GM12878 (cell line): ENCODE measurements at regions of chr17 and their contacts with region 1.

Region 1: GRCh38 chr17:11747441-11747840 is 149.2 kb downstream of the DNAH9 start:
- DNase-seq: no peak
- ATAC-seq: no peak
- H3K4me3 ChIP-seq: no peak overlapping the region
- H3K27ac ChIP-seq: no peak overlapping the region
- H3K4me1 ChIP-seq: no peaks in the 10 kb centered on the region
- H3K27me3 ChIP-seq: no peaks in the 10 kb centered on the region
- CTCF ChIP-seq: no peak
- EP300 ChIP-seq: no peak
- POLR2A ChIP-seq: no peak
- RAD21 ChIP-seq: no peak

Region 2: GRCh38 chr17:11701911-11702310 is 45.5 kb before region 1 on chr17:
- CTCF ChIA-PET with region 1: no interaction called
- POLR2A ChIA-PET with region 1: no interaction called
- RAD21 ChIA-PET with region 1: no interaction called
- SMC1A ChIA-PET with region 1: no interaction called
- in situ Hi-C with region 1: loop called (anchors 5 kb)
- intact Hi-C with region 1: no loop called
- DNase-seq: no peak
- ATAC-seq: no peak
- H3K4me3 ChIP-seq: no peak overlapping the region
- H3K27ac ChIP-seq: no peak overlapping the region
- H3K4me1 ChIP-seq: no peaks in the 10 kb centered on the region
- H3K27me3 ChIP-seq: no peaks in the 10 kb centered on the region
- CTCF ChIP-seq: no peak
- EP300 ChIP-seq: no peak
- POLR2A ChIP-seq: no peak
- RAD21 ChIP-seq: no peak